Activated T-helper 1 cell treated with anti-CD3 and anti-CD28 coated beads, Interleukin-12 subunit alpha, Interleukin-12 subunit beta, Interleukin-2, Interleukin-4 antibody, amounts not matched to agents 30 ng/mL and 10 ng/mL and 1 ng/mL, durations not matched to agents 14 hours and 24 hours and 36 hours (primary cell): ENCODE measurements at regions of chr1 and their contacts with region 1.

Region 1: DNA sequence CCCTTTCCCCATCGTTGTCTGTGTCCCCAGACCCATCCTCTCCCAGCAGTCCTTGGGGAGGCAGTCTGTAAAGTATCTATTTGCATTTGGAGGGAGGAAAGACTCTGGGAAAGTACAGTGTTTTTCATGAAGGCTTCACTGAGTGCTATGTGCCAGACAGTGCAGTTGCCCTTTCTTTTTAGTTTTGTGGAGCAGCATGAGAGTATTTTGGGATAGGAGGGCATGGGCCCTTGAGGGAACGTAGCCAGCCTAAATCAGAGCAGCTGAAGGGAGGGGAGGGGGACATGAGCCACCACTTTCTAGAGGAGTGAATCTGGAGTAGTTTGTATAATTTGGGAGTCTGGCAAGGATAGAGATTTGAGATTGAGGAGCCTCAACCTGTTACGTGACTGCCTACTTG is 404.0 kb upstream of the KAZN start:
- DNase-seq: no peak
- H3K4me3 Mint-ChIP-seq: no peak overlapping the region
- H3K27ac Mint-ChIP-seq: no peak overlapping the region
- H3K4me1 Mint-ChIP-seq: no peaks in the 10 kb centered on the region
- H3K27me3 Mint-ChIP-seq: peaks cover 4% of the 10 kb centered on the region

Region 2: GRCh38 chr1:14238472-14239307 is 44.2 kb after region 1 on chr1:
- intact Hi-C with region 1: loop called (anchors 2 kb)
- DNase-seq: no peak
- H3K4me3 Mint-ChIP-seq: no peak overlapping the region
- H3K27ac Mint-ChIP-seq: no peak overlapping the region
- H3K4me1 Mint-ChIP-seq: no peaks in the 10 kb centered on the region
- H3K27me3 Mint-ChIP-seq: no peaks in the 10 kb centered on the region

Region 3: GRCh38 chr1:14334336-14335176 is 140.0 kb after region 1 on chr1:
- intact Hi-C with region 1: no loop called
- DNase-seq: no peak
- H3K4me3 Mint-ChIP-seq: no peak overlapping the region
- H3K27ac Mint-ChIP-seq: no peak overlapping the region
- H3K4me1 Mint-ChIP-seq: peaks cover 6% of the 10 kb centered on the region
- H3K27me3 Mint-ChIP-seq: no peaks in the 10 kb centered on the region